ENCODE measurements at regions of chr2 and their contacts with region 1.

Region 1: DNA sequence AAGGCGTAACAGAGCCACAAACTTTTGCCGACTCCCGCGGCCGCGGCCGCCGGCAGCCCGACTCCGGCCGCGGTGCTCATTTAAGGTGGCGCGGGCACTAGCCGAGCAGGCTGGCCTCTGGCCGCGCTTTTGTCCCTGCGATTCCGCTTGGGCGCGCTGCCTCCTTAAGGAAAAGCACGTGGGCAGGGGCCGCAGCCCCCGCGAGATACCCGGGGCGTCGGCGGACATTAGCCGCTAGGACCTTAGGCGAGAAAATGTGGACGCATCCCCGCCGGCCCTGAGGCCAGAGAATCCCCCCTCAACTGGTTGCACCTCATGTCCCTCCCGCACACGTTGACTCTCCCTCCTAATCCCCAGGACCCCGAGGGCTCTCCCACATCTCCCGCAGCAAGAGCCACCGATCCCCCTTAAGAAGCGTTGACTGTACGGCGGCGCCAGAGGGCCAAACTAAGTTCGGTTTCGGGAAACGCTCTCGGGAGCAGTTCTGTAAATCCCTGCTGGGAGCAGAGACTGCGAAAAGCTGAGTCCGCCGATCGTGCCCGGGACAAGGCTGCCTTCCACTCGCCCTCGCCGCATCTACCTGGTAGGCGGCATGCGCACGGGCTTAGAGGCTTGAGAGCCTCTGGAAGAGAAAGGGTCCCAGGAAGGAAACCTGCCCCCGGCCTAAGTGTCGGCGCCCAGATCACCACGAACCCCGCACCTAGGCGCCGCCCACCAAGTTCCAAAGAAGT is 1.7 kb upstream of the SATB2 start:
- DNase-seq: peak; percentile 90
- H3K4me3 ChIP-seq: peak overlapping the region; percentile 90
- H3K27ac ChIP-seq: peak overlapping the region; percentile 57
- H3K27me3 ChIP-seq: peaks cover 26% of the 10 kb centered on the region
- CTCF ChIP-seq: no peak

Region 2: GRCh38 chr2:199395311-199395710 is 64.1 kb before region 1 on chr2:
- CTCF ChIA-PET with region 1: no interaction called
- POLR2A ChIA-PET with region 1: interaction called, 11 read pairs
- DNase-seq: no peak
- H3K4me3 ChIP-seq: no peak overlapping the region
- H3K27ac ChIP-seq: no peak overlapping the region
- H3K27me3 ChIP-seq: no peaks in the 10 kb centered on the region
- CTCF ChIP-seq: no peak

Region 3: GRCh38 chr2:199471443-199472057 is 12.1 kb after region 1 on chr2:
- CTCF ChIA-PET with region 1: interaction called, 11 read pairs
- POLR2A ChIA-PET with region 1: no interaction called
- DNase-seq: no peak
- H3K4me3 ChIP-seq: no peak overlapping the region
- H3K27ac ChIP-seq: no peak overlapping the region
- H3K27me3 ChIP-seq: peaks cover 60% of the 10 kb centered on the region
- CTCF ChIP-seq: peak; percentile 78

Measured in AG04450 (cell line).